Left ventricle myocardium superior (tissue), 1 donor: ENCODE measurements at regions of chr9 and their contacts with region 1.

Region 1: GRCh38 chr9:97632985-97633858 is at the starts of genes NCBP1 and TSTD2:
- DNase-seq: peak; percentile 99
- ATAC-seq: peak; percentile 93
- total RNA-seq, gene NCBP1: 21.4 TPM
- total RNA-seq, gene TSTD2: 25.9 TPM

Region 2: DNA sequence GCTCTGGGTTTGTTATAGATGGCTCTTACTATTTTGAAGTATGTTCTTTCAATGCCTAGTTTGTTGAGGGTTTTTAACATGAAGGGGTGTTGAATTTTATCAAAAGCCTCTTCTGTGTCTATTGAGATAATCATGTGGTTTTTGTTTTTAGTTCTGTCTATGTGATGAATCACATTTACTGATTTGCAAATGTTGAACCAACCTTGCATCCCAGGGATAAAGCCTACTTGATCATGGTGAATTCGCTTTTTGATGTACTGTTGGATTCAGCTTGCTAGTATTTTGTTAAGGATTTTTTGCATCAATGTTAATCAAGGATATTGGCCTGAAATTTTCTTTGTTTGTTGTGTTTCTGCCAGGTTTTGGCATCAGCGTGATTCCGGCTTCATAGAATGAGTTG is 300.2 kb before region 1 on chr9:
- intact Hi-C with region 1: no loop called
- DNase-seq: no peak
- ATAC-seq: no peak

Region 3: DNA sequence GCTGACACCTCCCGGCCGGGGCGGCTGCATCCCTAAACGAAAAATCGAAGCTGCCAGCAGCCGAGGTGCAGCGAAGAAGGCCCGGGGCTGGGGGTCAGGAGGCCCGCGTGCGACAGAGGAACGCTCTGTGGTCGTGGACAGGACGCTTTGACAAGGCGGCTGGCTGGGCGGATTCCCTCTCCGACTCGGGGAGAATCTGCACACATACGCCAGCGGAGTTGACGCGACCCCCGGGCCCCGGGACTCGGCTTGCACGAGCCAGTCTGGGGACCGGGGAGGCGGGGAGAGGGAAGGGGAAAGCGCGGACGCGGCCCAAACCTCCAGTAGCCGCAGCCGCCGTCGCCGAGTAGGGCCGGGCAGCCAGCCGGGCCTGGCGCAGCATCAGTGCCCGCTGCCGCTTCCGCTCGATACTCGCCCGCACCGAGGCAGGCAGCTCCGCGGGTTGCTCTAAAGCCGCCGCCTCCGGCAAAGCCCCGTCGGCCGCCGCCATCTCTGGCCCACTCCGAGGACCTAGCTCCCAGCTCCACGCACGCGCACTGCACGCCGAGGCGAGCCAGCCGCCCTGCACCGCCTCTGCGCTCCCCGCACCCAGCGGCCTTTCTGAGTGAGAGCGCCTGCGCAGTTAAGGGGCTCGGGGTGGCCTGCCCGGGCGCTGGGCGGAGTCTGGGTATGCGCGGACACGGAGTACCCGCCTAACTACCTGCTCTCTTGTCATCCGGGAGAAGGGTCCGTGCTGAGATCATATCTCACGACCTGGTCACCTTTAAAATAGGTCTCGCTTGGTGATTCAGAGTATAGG is 63.8 kb after region 1 on chr9 and contains the start of gene XPA:
- intact Hi-C with region 1: loop called (anchors 10 kb)
- DNase-seq: peak; percentile 99
- ATAC-seq: peak; percentile 99
- total RNA-seq, gene XPA: 6.4 TPM

Region 4: GRCh38 chr9:97900738-97901565 is 267.7 kb after region 1 on chr9:
- intact Hi-C with region 1: no loop called
- DNase-seq: no peak
- ATAC-seq: peak; percentile 45

Region 5: DNA sequence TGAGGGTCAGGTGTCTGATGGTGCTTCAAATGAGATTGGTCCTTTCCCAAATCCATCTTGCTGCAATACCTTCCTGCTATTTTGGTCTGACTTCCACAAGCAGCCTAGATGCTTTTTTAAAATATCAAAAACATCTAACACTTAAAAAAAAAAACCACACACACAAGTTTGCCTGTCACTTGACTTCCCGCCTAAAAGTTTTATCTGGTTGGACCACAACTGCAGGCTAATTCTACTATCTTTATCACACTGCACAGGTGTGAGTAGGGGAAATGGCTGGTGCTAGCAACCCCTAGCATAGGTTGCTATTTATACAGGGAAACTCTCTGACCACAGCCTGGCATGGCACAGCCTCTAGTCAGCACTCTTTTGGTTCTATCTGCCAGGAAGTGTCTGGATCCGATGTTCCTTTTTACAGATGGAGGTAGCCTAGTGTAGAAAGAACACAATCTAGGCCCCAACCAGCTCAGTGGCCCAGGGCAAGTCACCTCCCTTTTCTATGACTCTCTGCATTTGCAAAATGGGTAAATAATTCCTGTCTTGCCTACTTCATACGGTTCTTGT is 304.9 kb after region 1 on chr9 and contains the start of gene HEMGN:
- intact Hi-C with region 1: no loop called
- DNase-seq: no peak
- ATAC-seq: no peak
- total RNA-seq, gene HEMGN: not detected